Left cardiac atrium (tissue), 4 donors: ENCODE measurements at regions of chrX and their contacts with region 1.

Region 1: GRCh38 chrX:103674531-103675454 is 11.7 kb downstream of the MORF4L2 start:
- DNase-seq: no peak
- ATAC-seq: no peak

Region 2: GRCh38 chrX:103629318-103630170 is 45.2 kb before region 1 on chrX:
- intact Hi-C with region 1: loop called in 1 of 2 experiments (anchors 5 kb)
- DNase-seq: peak; percentile 74
- ATAC-seq: peak; percentile 90 to 97

Region 3: GRCh38 chrX:103637604-103638338 is 37.0 kb before region 1 on chrX:
- intact Hi-C with region 1: loop called (anchors 5 kb)
- DNase-seq: no peak
- ATAC-seq: no peak

Region 4: GRCh38 chrX:103730796-103731493 is 56.2 kb after region 1 on chrX:
- intact Hi-C with region 1: no loop called
- DNase-seq: peak; percentile 30
- ATAC-seq: peak; percentile 53 to 89

Region 5: GRCh38 chrX:103817502-103817901 is 142.7 kb after region 1 on chrX:
- intact Hi-C with region 1: no loop called
- DNase-seq: no peak
- ATAC-seq: no peak